Activated CD8-positive, alpha-beta T cell treated with anti-CD3 and anti-CD28 coated beads for 36 hours (primary cell): ENCODE measurements at regions of chr4 and their contacts with region 1.

Region 1: GRCh38 chr4:56301181-56302076 is 85.9 kb downstream of the AASDH start:
- DNase-seq: peak; percentile 80
- ATAC-seq: peak; percentile 95
- H3K4me3 Mint-ChIP-seq: no peak overlapping the region
- H3K27ac Mint-ChIP-seq: no peak overlapping the region
- H3K4me1 Mint-ChIP-seq: peaks cover 4% of the 10 kb centered on the region
- H3K27me3 Mint-ChIP-seq: peaks cover 2% of the 10 kb centered on the region
- CTCF ChIP-seq: peak; percentile 97

Region 2: DNA sequence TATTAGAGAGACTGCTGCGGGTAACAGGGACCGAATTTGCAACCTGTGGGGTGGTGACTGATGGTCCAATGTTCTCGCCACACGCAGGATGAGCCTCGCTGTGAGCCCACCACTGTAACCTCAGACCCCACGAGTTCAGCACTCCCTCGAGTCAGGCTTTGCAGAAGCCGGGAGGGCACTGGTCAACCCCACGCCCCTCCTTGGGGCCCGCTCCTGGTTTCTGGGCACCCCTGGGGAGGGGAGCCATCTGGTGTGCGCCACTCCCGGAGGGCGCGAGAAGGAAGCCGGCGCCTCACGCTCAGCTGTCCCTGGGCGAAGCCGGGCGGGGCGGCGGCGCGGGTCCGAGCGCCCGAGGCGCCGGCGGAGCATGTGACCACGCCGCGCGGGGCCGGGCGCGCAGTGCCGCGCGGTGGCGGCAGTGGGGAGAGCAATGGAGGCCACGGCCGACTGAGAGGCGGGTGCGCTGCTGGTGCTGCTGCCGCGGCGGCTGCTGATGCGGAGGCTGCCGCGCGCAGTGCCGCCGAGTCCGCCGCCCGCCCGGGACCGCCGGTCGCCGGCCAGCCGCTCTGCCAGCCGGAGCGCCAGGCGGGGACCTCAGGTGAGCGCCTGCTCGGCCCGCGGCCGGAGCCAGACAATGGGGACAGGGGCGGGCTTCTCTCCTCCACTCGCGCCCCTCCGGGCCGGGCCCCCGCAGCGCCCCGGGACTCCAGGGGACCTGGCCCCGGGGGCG is 252.6 kb before region 1 on chr4:
- CTCF ChIA-PET with region 1: no interaction called
- POLR2A ChIA-PET with region 1: no interaction called
- intact Hi-C with region 1: loop called (anchors 10 kb)
- DNase-seq: peak; percentile 59
- ATAC-seq: peak; percentile 97
- H3K4me3 Mint-ChIP-seq: peak overlapping the region; percentile 63
- H3K27ac Mint-ChIP-seq: no peak overlapping the region
- H3K4me1 Mint-ChIP-seq: peaks cover 6% of the 10 kb centered on the region
- H3K27me3 Mint-ChIP-seq: peaks cover 48% of the 10 kb centered on the region
- CTCF ChIP-seq: no peak

Region 3: DNA sequence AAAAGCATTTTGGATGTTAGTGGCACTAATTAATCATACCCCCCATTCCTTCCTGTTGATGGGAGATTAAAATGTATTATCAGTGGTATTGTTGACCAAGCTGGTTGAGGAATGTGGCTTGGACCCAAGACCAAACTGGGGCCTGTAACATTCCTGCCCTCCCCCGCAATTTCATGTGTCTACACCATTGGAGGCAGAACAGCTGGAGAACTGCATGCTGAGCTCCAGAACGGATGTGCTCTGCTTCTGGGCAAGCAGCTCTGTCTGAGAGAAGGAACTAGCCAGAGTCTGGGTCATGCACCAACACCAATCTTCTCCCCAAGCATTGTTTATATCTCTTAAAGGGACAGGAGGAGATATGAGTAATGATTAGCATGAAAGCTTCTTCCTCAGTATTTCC is 167.2 kb before region 1 on chr4:
- CTCF ChIA-PET with region 1: interaction called, 3 read pairs
- POLR2A ChIA-PET with region 1: no interaction called
- intact Hi-C with region 1: loop called (anchors 10 kb)
- DNase-seq: no peak
- ATAC-seq: no peak
- H3K4me3 Mint-ChIP-seq: no peak overlapping the region
- H3K27ac Mint-ChIP-seq: no peak overlapping the region
- H3K4me1 Mint-ChIP-seq: no peaks in the 10 kb centered on the region
- H3K27me3 Mint-ChIP-seq: peaks cover 3% of the 10 kb centered on the region
- CTCF ChIP-seq: no peak